Activated CD4-positive, alpha-beta T cell treated with anti-CD3 and anti-CD28 coated beads for 36 hours (primary cell): ENCODE measurements at regions of chrX and their contacts with region 1.

Region 1: GRCh38 chrX:13506574-13506973 is 62.8 kb upstream of the EGFL6 start:
- DNase-seq: peak; percentile 71
- ATAC-seq: peak; percentile 19
- H3K4me3 Mint-ChIP-seq: no peak overlapping the region
- H3K27ac Mint-ChIP-seq: no peak overlapping the region
- H3K4me1 Mint-ChIP-seq: peaks cover 4% of the 10 kb centered on the region
- H3K27me3 Mint-ChIP-seq: no peaks in the 10 kb centered on the region

Region 2: GRCh38 chrX:13646154-13646549 is 139.6 kb after region 1 on chrX:
- CTCF ChIA-PET with region 1: interaction called, 54 read pairs
- POLR2A ChIA-PET with region 1: no interaction called
- intact Hi-C with region 1: loop called (anchors 1 kb)
- DNase-seq: peak; percentile 68
- ATAC-seq: peak; percentile 31
- H3K4me3 Mint-ChIP-seq: no peak overlapping the region
- H3K27ac Mint-ChIP-seq: no peak overlapping the region
- H3K4me1 Mint-ChIP-seq: peaks cover 12% of the 10 kb centered on the region
- H3K27me3 Mint-ChIP-seq: no peaks in the 10 kb centered on the region

Region 3: GRCh38 chrX:13750204-13750603 is 243.6 kb after region 1 on chrX:
- CTCF ChIA-PET with region 1: interaction called, 11 read pairs
- POLR2A ChIA-PET with region 1: no interaction called
- intact Hi-C with region 1: loop called (anchors 2 to 10 kb)
- DNase-seq: peak; percentile 10
- ATAC-seq: peak; percentile 65
- H3K4me3 Mint-ChIP-seq: no peak overlapping the region
- H3K27ac Mint-ChIP-seq: peak overlapping the region; percentile 25
- H3K4me1 Mint-ChIP-seq: peaks cover 18% of the 10 kb centered on the region
- H3K27me3 Mint-ChIP-seq: no peaks in the 10 kb centered on the region